ENCODE measurements at regions of chr1 and their contacts with region 1.

Region 1: DNA sequence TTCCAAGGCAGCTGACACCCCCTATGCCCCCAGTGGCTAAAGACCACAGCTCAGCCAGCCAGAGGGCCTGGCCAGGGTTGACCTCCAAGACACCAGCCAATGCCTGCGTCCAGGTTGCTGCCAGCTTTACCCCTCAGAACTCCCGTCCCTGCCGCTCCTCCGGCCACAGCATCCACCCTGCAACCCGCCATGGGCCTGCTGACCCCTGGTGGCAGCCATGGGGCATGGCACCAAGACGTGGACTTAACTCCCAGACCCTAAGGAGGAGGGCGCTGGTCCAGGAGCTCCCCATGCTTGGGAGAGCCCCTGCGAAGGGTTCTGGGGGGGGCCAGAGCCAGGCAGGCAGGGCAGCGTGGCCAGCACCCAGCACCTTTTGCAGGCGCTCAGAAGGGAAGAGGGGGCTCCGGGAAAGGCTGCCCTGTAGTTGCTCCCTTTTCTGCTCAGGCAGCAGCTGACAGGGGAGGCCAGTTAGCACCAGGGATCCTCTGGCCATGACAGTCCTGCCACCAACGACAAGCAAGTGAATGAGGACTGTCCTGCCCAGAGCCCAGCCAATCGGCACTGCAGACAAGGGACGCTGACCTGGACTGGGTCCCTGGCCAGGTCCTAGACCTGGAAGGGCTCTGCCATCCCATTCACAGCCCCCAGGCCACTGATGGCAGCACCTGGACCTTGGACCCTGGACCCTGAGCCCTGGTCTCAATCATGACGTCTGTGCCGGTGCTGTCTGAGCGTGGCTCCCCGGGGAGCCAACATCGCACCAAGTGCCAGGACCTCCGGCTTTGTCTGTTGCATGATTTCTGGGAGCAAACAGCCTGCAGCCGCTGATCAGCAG is 246.2 kb downstream of the NPHP4 start:
- DNase-seq: peak; percentile 77
- ATAC-seq: peak; percentile 76
- H3K4me3 Mint-ChIP-seq: no peak overlapping the region
- H3K27ac Mint-ChIP-seq: no peak overlapping the region
- H3K4me1 Mint-ChIP-seq: no peaks in the 10 kb centered on the region
- H3K27me3 Mint-ChIP-seq: peaks cover 13% of the 10 kb centered on the region

Region 2: DNA sequence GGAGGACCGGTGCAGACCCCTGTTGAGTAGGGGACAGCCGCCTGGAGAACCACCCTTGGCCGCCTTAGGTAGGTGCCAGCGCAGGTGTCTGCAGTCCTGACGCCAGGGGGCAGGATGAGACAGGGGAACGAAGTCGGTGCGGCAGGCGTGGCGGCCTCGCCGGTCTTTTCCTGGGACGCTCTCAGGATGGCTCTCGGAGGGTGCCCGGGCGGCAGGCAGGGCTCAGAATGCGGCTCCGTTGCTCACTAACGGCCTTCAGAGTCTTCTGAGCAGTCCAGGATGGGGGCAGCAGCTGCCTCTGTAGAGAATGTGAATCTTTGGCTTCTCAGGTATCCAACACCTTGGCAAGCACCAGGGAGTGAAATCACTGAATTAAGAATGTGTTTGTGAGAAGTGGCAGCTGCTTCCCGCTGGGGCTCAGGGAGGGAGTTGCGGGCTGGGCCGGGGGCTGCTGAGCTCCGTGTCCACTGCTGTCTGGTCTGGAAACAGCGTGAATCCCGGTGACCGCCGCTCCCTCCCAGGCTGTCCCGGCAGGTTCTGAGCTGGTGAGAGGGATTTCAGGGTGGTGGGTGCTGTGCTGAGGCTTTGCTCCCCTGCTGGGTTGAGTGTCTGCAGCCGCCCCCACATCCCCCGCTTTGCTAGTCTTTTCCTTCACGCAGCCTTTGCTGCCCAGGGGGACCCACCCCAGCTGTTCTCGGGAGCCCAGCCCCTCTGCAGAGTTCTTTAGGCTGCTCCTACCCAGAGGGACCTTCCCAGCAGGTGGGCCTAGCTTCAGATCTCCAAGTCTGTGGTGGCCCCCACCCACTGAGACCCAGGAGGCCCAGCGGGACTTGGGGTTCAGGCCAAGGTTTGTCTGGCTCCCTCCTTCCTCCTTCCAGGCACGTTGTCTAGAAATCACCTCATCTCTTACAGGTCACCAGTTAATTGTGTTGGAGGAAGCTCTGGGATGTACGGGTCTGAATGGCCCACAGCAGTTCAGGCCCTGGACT is 1834.8 kb before region 1 on chr1:
- CTCF ChIA-PET with region 1: interaction called, 3 read pairs
- POLR2A ChIA-PET with region 1: no interaction called
- intact Hi-C with region 1: loop called in 1 of 2 experiments (anchors 2 kb)
- DNase-seq: peak; percentile 90
- ATAC-seq: peak; percentile 87
- H3K4me3 Mint-ChIP-seq: no peak overlapping the region
- H3K27ac Mint-ChIP-seq: no peak overlapping the region
- H3K4me1 Mint-ChIP-seq: peaks cover 3% of the 10 kb centered on the region
- H3K27me3 Mint-ChIP-seq: no peaks in the 10 kb centered on the region

Region 3: DNA sequence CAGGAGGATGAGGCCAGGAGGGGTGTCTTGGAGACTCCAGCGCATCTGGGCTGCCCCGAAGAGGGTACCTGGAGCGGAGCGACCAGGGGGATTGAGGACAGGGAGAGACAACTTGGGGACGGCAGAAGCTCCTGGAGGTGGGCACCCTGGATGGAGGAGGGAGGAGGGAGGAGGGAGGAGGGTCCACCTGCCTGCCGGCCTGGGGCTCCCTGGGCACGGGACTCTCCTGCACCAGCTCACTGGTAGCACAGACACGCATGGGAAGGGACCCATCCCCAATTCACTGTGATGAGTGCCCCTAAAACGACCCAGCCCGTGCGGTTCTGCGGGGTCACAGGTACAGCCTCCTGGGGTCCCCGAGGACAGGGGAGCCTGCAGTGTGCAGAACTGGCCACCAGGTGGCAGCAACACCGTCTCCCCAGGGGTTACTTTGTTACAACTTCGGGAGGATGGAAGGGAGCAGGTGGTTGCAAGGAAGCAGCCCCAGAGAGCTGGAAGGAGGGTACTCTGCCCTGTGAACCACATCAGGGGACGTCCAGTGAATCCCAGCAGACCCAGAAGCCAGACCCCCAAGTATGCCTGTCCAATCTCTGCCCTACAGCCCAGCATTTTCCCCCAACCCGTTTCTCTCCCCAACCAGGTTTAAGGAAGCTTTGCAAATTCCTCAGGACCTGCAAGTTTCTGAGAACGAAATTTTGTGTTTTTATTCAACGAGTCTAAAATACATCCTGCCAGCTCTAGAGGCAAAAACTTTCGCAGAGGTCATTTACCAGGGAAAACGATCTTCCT is 236.1 kb before region 1 on chr1:
- CTCF ChIA-PET with region 1: interaction called, 9 read pairs
- POLR2A ChIA-PET with region 1: no interaction called
- intact Hi-C with region 1: loop called (anchors 1 to 2 kb)
- DNase-seq: peak; percentile 82
- ATAC-seq: peak; percentile 60
- H3K4me3 Mint-ChIP-seq: no peak overlapping the region
- H3K27ac Mint-ChIP-seq: no peak overlapping the region
- H3K4me1 Mint-ChIP-seq: peaks cover 2% of the 10 kb centered on the region
- H3K27me3 Mint-ChIP-seq: peaks cover 6% of the 10 kb centered on the region

Region 4: GRCh38 chr1:5637171-5637570 is 108.8 kb before region 1 on chr1:
- CTCF ChIA-PET with region 1: interaction called, 4 read pairs
- POLR2A ChIA-PET with region 1: no interaction called
- intact Hi-C with region 1: loop called in 1 of 2 experiments (anchors 1 kb)
- DNase-seq: peak; percentile 49
- ATAC-seq: no peak
- H3K4me3 Mint-ChIP-seq: no peak overlapping the region
- H3K27ac Mint-ChIP-seq: no peak overlapping the region
- H3K4me1 Mint-ChIP-seq: no peaks in the 10 kb centered on the region
- H3K27me3 Mint-ChIP-seq: peaks cover 19% of the 10 kb centered on the region

Region 5: DNA sequence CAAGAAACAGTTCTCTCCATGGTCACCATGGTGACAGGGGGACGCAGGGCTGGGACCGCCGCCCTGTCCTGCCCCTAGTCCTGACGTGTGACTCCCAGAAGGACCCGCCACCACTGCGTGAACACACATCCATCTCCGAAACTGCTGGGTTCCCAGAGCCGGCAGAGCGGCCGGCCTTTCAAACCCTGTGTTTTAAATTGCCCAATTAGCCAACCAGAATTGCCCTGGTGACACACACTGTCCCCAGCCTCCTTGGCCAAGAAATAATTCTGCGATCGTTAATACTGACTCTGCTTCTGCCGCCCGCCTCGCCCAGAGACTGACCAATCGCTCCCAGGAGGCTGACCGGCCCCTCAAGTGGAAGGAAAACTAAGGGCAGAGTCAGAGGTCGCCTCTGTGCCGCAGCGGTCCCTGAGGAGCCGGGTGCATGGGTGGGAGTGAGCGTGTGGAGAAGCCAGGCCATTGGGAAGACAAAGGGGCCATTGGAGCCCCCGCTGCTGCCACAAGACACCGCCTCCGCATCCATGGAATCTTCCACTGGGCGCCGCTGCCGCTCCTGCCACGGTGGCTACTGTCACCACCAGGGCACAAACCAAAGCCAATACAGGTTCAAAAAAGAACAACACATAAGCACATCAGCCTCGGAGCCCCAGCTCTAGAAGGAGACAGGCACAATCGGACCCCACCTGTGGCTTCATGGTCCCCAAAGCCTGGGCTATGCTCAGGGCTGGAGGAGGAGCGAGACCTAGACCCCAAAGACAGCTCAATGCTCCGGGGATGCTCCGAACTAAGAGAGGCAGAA is 27.0 kb before region 1 on chr1:
- CTCF ChIA-PET with region 1: no interaction called
- POLR2A ChIA-PET with region 1: no interaction called
- intact Hi-C with region 1: no loop called
- DNase-seq: no peak
- ATAC-seq: no peak
- H3K4me3 Mint-ChIP-seq: no peak overlapping the region
- H3K27ac Mint-ChIP-seq: no peak overlapping the region
- H3K4me1 Mint-ChIP-seq: no peaks in the 10 kb centered on the region
- H3K27me3 Mint-ChIP-seq: peaks cover 7% of the 10 kb centered on the region